ENCODE measurements at regions of chr15 and their contacts with region 1.

Region 1: DNA sequence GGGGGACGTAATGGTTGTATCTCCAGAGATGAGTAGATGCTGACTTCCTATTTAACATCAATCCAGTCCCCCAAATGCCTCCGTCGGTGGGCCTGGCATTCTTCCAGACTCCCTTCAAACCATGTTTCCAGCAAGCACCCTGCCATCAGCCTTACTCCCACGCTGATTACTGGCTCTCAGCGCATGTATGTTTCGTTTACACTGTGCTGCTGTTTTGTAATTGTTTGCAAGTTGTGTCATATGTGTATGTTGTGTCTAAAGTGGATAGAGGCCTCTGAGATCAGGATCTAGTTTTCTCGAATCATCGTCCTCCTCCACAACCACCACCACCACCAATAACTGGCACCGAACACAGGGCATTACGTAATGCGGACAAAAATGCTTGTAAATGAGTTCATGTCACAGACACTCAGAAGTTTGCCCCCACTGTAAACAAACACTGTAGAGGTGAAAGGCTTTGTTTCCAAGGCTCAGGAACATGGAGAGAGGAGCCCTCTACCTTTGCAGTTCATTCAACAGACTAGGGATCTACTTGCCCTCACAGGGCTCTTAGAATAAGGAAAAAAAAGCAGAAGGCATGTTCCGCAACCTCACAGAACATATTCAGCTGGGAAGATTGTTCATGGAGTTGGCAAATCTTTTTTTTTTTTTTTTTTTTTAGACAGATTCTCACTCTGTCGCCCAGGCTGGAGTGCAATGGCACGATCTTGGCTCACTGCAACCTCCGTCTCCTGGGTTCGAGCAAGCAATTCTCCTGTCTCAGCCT is 46.1 kb upstream of the SEMA4B start:
- DNase-seq: peak; percentile 35
- H3K4me3 ChIP-seq: no peak overlapping the region
- H3K27ac ChIP-seq: no peak overlapping the region
- H3K4me1 ChIP-seq: peaks cover 6% of the 10 kb centered on the region
- H3K27me3 ChIP-seq: no peaks in the 10 kb centered on the region
- CTCF ChIP-seq: no peak

Region 2: DNA sequence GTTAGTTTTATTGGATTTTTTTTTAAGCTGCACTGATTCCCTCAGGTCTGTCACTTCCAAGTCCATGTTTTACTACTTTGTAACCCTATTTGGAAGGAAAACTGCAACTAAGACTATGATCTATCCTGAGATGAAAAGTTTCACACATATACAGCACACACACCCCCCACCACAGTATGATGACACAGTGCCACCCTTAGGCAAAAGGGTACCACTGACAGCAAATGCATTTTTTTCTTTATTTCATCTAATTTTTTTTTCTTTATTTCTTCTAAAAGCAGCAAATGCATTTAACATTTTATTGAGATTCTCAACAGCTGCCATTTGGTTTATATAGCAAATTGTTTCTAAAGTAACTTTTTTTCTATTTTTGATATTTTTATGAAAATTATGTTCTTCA is 131.6 kb after region 1 on chr15:
- CTCF ChIA-PET with region 1: no interaction called
- POLR2A ChIA-PET with region 1: no interaction called
- intact Hi-C with region 1: loop called (anchors 2 kb)
- DNase-seq: peak; percentile 62
- H3K4me3 ChIP-seq: no peak overlapping the region
- H3K27ac ChIP-seq: no peak overlapping the region
- H3K4me1 ChIP-seq: no peaks in the 10 kb centered on the region
- H3K27me3 ChIP-seq: no peaks in the 10 kb centered on the region
- CTCF ChIP-seq: peak; percentile 68

Measured in A673 (cell line).